ENCODE measurements at regions of chr12 and their contacts with region 1.

Region 1: DNA sequence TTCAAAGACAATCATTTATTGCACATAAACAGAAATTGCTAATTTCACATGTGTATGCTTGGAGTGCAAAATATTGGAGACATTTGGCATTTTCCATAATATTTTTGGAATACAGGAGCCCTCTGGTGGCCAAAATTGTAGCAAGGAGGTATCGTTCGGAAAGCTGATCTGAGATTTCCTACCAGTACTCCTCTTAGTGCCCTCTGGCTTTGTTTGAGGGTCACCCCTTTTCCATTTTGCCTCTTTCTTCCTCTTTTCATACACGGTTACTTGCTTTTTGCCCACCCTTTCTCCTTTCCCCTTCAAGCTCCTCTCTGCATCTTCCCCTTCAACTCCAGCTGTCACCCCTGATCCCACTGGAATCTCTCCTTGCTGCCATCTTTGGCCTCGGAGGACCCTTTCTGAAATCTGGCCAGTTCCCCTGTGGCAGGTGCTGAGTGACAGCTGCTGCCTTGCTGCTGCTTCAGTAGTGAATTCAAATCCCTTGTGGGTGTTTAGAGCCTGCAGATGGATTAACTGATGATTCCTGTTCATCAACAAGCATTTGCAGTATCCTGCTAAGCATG is 164.6 kb upstream of the PARP11 start:
- DNase-seq: no peak
- H3K4me3 ChIP-seq: no peak overlapping the region
- H3K27me3 ChIP-seq: peaks cover 11% of the 10 kb centered on the region
- CTCF ChIP-seq: peak; percentile 72

Region 2: DNA sequence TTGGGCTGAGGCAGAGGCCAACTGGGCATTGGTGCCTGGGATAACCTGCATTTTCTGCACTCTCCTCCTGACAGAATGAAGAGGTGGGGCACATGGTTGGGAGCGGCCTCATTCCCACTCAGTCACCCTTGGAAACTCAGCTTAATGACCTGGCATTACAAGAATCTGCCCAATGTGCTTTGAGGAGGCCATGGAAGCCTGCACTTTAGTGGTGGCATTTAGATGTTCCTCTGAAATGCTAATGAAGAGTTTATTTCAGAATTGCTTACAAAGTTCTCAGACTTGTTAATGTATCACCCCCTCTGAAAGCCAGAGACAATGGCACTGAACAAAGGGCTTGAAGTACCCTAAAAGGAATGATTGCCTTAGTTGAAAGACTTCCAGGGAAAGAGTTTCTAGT is 93.2 kb before region 1 on chr12:
- CTCF ChIA-PET with region 1: no interaction called
- POLR2A ChIA-PET with region 1: no interaction called
- DNase-seq: no peak
- H3K4me3 ChIP-seq: no peak overlapping the region
- H3K27me3 ChIP-seq: no peaks in the 10 kb centered on the region
- CTCF ChIP-seq: no peak

Region 3: GRCh38 chr12:4006743-4007142 is 31.1 kb before region 1 on chr12:
- CTCF ChIA-PET with region 1: interaction called, 392 read pairs
- POLR2A ChIA-PET with region 1: no interaction called
- DNase-seq: no peak
- H3K4me3 ChIP-seq: no peak overlapping the region
- H3K27me3 ChIP-seq: no peaks in the 10 kb centered on the region
- CTCF ChIP-seq: no peak

Region 4: DNA sequence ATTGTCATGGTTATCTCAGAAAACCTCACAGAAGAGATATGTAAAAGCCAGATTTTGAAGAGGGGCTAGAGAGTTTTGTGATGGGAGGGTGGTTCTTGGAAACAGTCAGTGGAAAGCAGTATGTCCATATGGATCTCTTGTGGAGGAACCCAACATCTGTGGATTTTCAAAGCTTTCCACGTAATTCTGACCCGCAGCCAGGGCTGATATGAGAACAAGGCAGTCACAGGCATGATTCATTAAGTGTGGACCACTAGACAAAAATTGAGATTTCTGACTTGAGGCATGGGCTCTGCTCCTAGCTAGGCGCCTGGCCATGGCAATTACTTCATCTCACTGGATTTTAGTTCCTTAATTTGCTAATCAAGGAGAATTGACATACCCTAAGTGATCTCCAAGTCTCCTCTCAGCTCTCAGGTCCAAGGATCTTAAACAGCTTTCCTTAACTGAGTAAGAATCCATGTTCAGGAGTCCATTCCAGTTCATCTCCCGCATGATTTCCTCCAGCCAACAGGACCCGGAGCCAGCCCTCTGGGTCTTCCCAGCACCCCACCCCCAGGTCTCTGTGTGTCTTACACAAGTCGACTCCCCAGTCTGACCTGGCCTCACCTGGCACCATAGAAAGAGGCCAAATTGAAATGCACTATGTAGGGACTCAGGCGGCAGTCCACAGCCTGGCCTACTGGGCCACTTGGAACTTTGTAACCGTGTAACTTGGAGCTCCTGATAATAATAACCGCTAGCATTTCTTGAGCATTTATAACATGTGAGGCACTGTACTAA is 11.7 kb after region 1 on chr12:
- CTCF ChIA-PET with region 1: interaction called, 11 read pairs
- POLR2A ChIA-PET with region 1: no interaction called
- DNase-seq: no peak
- H3K4me3 ChIP-seq: no peak overlapping the region
- H3K27me3 ChIP-seq: peaks cover 6% of the 10 kb centered on the region
- CTCF ChIP-seq: no peak